ENCODE measurements at regions of chr6 and their contacts with region 1.

Region 1: DNA sequence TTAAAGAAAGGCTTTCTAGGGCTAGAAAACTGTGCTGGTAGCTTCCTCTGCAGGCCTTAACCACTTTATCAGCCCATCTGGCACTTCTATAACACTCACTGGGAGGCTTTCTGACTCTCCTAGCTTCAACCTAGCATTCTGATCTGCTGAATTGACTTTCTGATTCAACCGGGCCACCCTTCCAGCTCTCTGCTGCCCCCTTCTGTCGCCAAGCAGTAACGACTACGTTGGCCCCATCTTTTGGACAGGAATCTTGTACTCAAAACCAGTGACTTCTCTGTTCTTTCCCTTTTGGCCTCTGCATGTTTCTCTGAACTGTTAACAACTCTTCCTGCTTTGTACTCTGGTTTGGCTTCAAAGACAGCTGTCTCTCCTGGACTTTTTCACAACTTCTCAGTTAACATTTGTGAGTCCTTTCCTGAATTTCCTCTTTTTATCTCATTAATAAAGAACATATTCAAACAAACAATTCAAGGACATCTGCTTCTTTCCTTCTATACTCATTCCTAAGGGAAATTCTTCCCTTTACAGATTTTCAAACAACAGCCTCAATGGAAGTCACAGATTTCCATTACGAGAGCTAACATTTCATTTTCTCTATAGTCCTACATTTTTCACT is 43.9 kb upstream of the FAM135A start:
- DNase-seq: peak; percentile 73
- H3K4me3 Mint-ChIP-seq: no peak overlapping the region
- H3K27ac Mint-ChIP-seq: no peak overlapping the region
- H3K4me1 Mint-ChIP-seq: peaks cover 13% of the 10 kb centered on the region
- H3K27me3 Mint-ChIP-seq: peaks cover 69% of the 10 kb centered on the region
- CTCF ChIP-seq: peak; percentile 89

Region 2: GRCh38 chr6:70304616-70305015 is 64.8 kb before region 1 on chr6:
- CTCF ChIA-PET with region 1: interaction called, 233 read pairs
- POLR2A ChIA-PET with region 1: interaction called, 6 read pairs
- intact Hi-C with region 1: no loop called
- DNase-seq: no peak
- H3K4me3 Mint-ChIP-seq: no peak overlapping the region
- H3K27ac Mint-ChIP-seq: no peak overlapping the region
- H3K4me1 Mint-ChIP-seq: no peaks in the 10 kb centered on the region
- H3K27me3 Mint-ChIP-seq: peaks cover 92% of the 10 kb centered on the region
- CTCF ChIP-seq: no peak

Region 3: GRCh38 chr6:70390067-70390466 is 20.6 kb after region 1 on chr6:
- CTCF ChIA-PET with region 1: interaction called, 22 read pairs
- POLR2A ChIA-PET with region 1: interaction called, 4 read pairs
- intact Hi-C with region 1: no loop called
- DNase-seq: no peak
- H3K4me3 Mint-ChIP-seq: no peak overlapping the region
- H3K27ac Mint-ChIP-seq: no peak overlapping the region
- H3K4me1 Mint-ChIP-seq: no peaks in the 10 kb centered on the region
- H3K27me3 Mint-ChIP-seq: no peaks in the 10 kb centered on the region
- CTCF ChIP-seq: no peak

Region 4: GRCh38 chr6:70413114-70413991 is 43.9 kb after region 1 on chr6 and contains the start of gene FAM135A:
- CTCF ChIA-PET with region 1: interaction called, 29 read pairs
- POLR2A ChIA-PET with region 1: interaction called, 37 read pairs
- intact Hi-C with region 1: loop called (anchors 1 kb)
- DNase-seq: peak; percentile 99
- H3K4me3 Mint-ChIP-seq: peak within 1 kb of the TSS; percentile 92
- H3K27ac Mint-ChIP-seq: peak within 1 kb of the TSS; percentile 75
- H3K4me1 Mint-ChIP-seq: no peaks in the 10 kb centered on the region
- H3K27me3 Mint-ChIP-seq: no peaks in the 10 kb centered on the region
- CTCF ChIP-seq: no peak
- total RNA-seq, gene FAM135A: 20.4 and 22.0 TPM in 2 replicates

Region 5: GRCh38 chr6:70686548-70687133 is 317.2 kb after region 1 on chr6:
- CTCF ChIA-PET with region 1: interaction called, 4 read pairs
- POLR2A ChIA-PET with region 1: no interaction called
- intact Hi-C with region 1: loop called (anchors 5 kb)
- DNase-seq: peak; percentile 42
- H3K4me3 Mint-ChIP-seq: no peak overlapping the region
- H3K27ac Mint-ChIP-seq: no peak overlapping the region
- H3K4me1 Mint-ChIP-seq: no peaks in the 10 kb centered on the region
- H3K27me3 Mint-ChIP-seq: no peaks in the 10 kb centered on the region
- CTCF ChIP-seq: peak; percentile 37